BJ (cell line): ENCODE measurements at regions of chr7 and their contacts with region 1.

Region 1: GRCh38 chr7:23685731-23686130 is 5.7 kb downstream of the FAM221A start:
- DNase-seq: no peak
- H3K4me3 ChIP-seq: no peak overlapping the region
- H3K27me3 ChIP-seq: no peaks in the 10 kb centered on the region
- CTCF ChIP-seq: no peak

Region 2: DNA sequence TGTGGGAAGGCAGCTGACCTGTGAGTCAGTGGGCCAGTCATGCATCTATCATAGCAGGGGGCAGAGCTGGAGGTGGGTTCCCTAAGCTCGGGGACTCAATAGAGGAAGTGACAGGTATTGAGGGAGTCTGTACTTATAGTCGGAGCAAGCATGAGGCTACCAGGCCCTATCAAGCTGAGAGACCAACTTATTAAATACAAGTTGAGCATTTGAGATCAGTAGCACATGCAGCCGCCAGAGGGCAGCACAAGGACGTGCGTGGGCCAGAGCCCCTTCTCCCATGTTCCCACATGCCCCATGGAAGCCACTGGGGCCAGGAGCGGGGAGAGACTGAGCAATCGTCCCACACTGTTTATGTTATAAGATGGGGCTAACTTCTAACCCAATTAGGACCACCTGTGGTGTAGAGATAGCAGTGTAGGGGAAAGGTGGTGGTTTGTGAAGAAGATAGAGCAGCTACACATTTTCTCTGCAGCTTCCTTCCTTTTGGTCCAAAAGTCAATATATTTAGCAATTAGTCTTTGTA is 11.2 kb after region 1 on chr7:
- CTCF ChIA-PET with region 1: interaction called, 17 read pairs
- POLR2A ChIA-PET with region 1: interaction called, 20 read pairs
- DNase-seq: no peak
- H3K4me3 ChIP-seq: no peak overlapping the region
- H3K27me3 ChIP-seq: no peaks in the 10 kb centered on the region
- CTCF ChIP-seq: peak; percentile 73

Region 3: DNA sequence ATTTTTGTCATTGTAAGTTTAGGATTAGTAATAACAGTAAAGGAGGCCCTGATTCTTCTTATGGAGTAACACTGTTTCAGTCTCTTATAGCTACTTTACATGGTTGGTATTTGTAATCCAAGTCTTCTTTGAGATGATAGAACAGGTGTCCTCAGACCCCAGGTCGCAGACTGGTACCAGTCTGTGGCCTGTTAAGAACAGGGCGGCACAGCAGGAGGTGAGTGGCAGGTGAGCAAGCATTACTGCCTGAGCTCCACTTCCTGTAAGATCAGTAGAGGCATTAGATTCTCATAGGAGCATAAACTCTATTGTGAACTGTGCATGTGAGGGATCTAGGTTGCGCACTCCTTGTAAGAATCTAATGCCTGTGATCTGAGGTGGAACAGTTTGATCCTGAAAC is 101.5 kb after region 1 on chr7:
- CTCF ChIA-PET with region 1: no interaction called
- POLR2A ChIA-PET with region 1: no interaction called
- DNase-seq: no peak
- H3K4me3 ChIP-seq: no peak overlapping the region
- H3K27me3 ChIP-seq: no peaks in the 10 kb centered on the region
- CTCF ChIP-seq: no peak

Region 4: DNA sequence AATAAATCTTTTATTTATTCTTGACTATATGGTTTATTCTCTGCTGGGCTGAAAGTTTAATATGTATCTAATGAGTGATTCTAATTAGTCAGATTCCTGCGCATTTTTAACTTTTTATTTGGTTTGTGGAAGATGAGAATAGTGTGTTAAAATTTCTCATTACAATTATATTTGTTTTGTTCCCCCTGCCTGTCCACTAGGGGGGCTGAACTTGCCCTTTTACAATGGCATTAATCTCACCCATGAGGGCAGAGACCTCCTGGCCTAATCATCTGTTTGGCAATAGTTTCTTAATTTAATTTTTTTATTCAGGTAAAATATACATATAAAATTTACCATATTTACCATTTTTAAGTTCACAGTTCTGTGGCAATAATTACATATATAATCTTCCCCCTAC is 319.8 kb after region 1 on chr7:
- CTCF ChIA-PET with region 1: no interaction called
- POLR2A ChIA-PET with region 1: no interaction called
- DNase-seq: no peak
- H3K4me3 ChIP-seq: no peak overlapping the region
- H3K27me3 ChIP-seq: no peaks in the 10 kb centered on the region
- CTCF ChIP-seq: no peak